Naive thymus-derived CD4-positive, alpha-beta T cell (primary cell): ENCODE measurements at regions of chr1 and their contacts with region 1.

Region 1: GRCh38 chr1:117367047-117368018 is at the start of gene MAN1A2:
- DNase-seq: peak in 7 of 9 donors; percentile 59 to 79 (median 75)
- ATAC-seq: peak; percentile 78
- H3K4me3 ChIP-seq: peak within 1 kb of the TSS; percentile 83
- H3K4me3 Mint-ChIP-seq: peak within 1 kb of the TSS; percentile 92 to 98 (median 95)
- H3K27ac ChIP-seq: peak within 1 kb of the TSS; percentile 91
- H3K27ac Mint-ChIP-seq: peak within 1 kb of the TSS; percentile 92 to 99 (median 97)
- H3K4me1 ChIP-seq: peaks cover 23 to 44% of the 10 kb centered on the region in 2 donors
- H3K4me1 Mint-ChIP-seq: peaks cover 46 to 82% (median 73%) of the 10 kb centered on the region in 7 donors
- H3K27me3 ChIP-seq: no peaks in the 10 kb centered on the region
- H3K27me3 Mint-ChIP-seq: no peaks in the 10 kb centered on the region
- total RNA-seq, gene MAN1A2: 40.4 to 63.4 (median 47.1) TPM

Region 2: GRCh38 chr1:117001254-117001927 is 365.9 kb before region 1 on chr1 and contains the start of gene CD101:
- CTCF ChIA-PET with region 1: no interaction called
- POLR2A ChIA-PET with region 1: no interaction called
- intact Hi-C with region 1: loop called in 1 of 2 experiments (anchors 10 kb)
- DNase-seq: peak in 4 of 9 donors; percentile 18 to 39 (median 32)
- ATAC-seq: peak; percentile 72
- H3K4me3 ChIP-seq: peak within 1 kb of the TSS; percentile 17
- H3K4me3 Mint-ChIP-seq: peak within 1 kb of the TSS; percentile 30 to 72 (median 60)
- H3K27ac ChIP-seq: peak within 1 kb of the TSS; percentile 60
- H3K27ac Mint-ChIP-seq: peak within 1 kb of the TSS; percentile 84 to 95 (median 87)
- H3K4me1 ChIP-seq: peaks cover 0 to 48% of the 10 kb centered on the region in 2 donors
- H3K4me1 Mint-ChIP-seq: peaks cover 36 to 72% (median 59%) of the 10 kb centered on the region in 7 donors
- H3K27me3 ChIP-seq: no peaks in the 10 kb centered on the region
- H3K27me3 Mint-ChIP-seq: no peaks in the 10 kb centered on the region
- total RNA-seq, gene CD101: 3.9 to 15.4 (median 10.3) TPM

Region 3: GRCh38 chr1:117339866-117340700 is 27.2 kb before region 1 on chr1:
- CTCF ChIA-PET with region 1: no interaction called
- POLR2A ChIA-PET with region 1: interaction called, 4 read pairs
- intact Hi-C with region 1: loop called in 1 of 2 experiments (anchors 2 kb)
- DNase-seq: peak in 7 of 9 donors; percentile 10 to 44 (median 26)
- ATAC-seq: peak; percentile 78
- H3K4me3 ChIP-seq: no peak overlapping the region
- H3K4me3 Mint-ChIP-seq: no peak overlapping the region
- H3K27ac ChIP-seq: no peak overlapping the region
- H3K27ac Mint-ChIP-seq: peak overlapping the region in 4 of 9 donors; percentile 13 to 44 (median 24)
- H3K4me1 ChIP-seq: no peaks in the 10 kb centered on the region
- H3K4me1 Mint-ChIP-seq: peaks cover 5 to 27% (median 25%) of the 10 kb centered on the region in 7 donors
- H3K27me3 ChIP-seq: no peaks in the 10 kb centered on the region
- H3K27me3 Mint-ChIP-seq: peaks cover 0 to 7% (median 0%) of the 10 kb centered on the region in 5 donors

Region 4: DNA sequence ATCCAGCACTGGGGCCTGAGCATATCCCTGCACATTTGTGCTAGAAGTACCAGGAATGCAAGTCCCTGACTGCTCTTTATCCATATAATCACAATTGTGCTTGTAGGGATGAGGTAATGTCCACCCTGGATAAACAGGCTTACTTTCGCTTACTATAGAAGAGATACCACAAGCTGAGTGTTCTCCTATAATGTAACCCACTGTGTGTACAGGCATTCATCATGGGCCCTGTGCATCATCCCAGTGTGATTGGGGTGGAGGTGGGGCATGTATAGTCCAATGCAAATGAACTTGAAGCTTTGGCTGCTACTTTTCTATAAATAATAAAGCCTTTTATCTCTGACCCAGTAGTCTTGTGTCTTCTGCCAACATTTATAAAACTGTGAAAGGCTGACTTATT is 69.2 kb after region 1 on chr1:
- CTCF ChIA-PET with region 1: no interaction called
- POLR2A ChIA-PET with region 1: no interaction called
- intact Hi-C with region 1: no loop called
- DNase-seq: no peak
- ATAC-seq: no peak
- H3K4me3 ChIP-seq: no peak overlapping the region
- H3K4me3 Mint-ChIP-seq: no peak overlapping the region
- H3K27ac ChIP-seq: no peak overlapping the region
- H3K27ac Mint-ChIP-seq: no peak overlapping the region
- H3K4me1 ChIP-seq: no peaks in the 10 kb centered on the region
- H3K4me1 Mint-ChIP-seq: peaks cover 0 to 25% (median 16%) of the 10 kb centered on the region in 7 donors
- H3K27me3 ChIP-seq: no peaks in the 10 kb centered on the region
- H3K27me3 Mint-ChIP-seq: no peaks in the 10 kb centered on the region

Region 5: DNA sequence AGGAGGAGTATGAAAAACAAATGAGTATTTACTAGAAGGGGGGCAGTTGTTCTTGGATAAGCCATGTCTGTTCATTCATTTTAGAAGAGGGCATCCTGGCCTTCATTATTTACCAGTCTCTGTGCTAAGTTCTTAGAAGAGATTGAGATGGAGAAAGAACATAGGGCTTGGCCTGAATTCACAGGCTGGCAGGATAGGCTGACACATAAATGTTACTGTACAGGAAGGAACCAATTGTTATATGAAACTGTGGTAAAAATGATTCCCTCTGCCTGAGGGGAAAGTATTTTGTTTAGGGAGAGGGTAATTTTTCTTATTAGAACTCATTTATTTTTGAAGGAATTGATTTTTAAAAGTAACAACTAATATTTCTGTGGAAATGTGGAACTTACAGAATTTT is 99.4 kb after region 1 on chr1:
- CTCF ChIA-PET with region 1: no interaction called
- POLR2A ChIA-PET with region 1: no interaction called
- intact Hi-C with region 1: loop called in 1 of 2 experiments (anchors 5 kb)
- DNase-seq: no peak
- ATAC-seq: no peak
- H3K4me3 ChIP-seq: no peak overlapping the region
- H3K4me3 Mint-ChIP-seq: no peak overlapping the region
- H3K27ac ChIP-seq: no peak overlapping the region
- H3K27ac Mint-ChIP-seq: no peak overlapping the region
- H3K4me1 ChIP-seq: no peaks in the 10 kb centered on the region
- H3K4me1 Mint-ChIP-seq: peaks cover 0 to 7% (median 0%) of the 10 kb centered on the region in 7 donors
- H3K27me3 ChIP-seq: no peaks in the 10 kb centered on the region
- H3K27me3 Mint-ChIP-seq: no peaks in the 10 kb centered on the region

Region 6: DNA sequence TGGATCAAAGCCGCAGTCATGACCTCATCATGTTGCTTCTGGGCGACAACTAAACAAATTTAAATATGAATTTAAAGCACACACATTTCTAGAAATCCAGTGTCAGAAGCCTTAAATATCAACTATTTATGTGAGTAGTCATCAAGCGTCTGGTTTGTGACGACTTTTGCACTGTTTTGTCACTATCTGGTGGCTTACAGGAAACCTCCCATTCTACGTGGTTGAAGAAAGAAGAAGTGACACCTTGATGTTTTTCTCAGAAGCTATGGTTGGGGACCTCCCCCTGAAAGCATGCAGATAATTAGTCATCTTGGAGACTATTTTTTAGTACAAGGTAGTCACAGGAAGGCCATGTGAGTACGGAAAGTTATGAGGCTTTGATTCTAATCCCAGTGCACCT is 297.0 kb after region 1 on chr1:
- CTCF ChIA-PET with region 1: no interaction called
- POLR2A ChIA-PET with region 1: interaction called, 3 read pairs
- intact Hi-C with region 1: loop called (anchors 2 to 5 kb)
- DNase-seq: peak in 8 of 9 donors; percentile 49 to 87 (median 83)
- ATAC-seq: peak; percentile 88
- H3K4me3 ChIP-seq: peak overlapping the region; percentile 5
- H3K4me3 Mint-ChIP-seq: peak overlapping the region in 7 of 10 donors; percentile 19 to 60 (median 37)
- H3K27ac ChIP-seq: no peak overlapping the region
- H3K27ac Mint-ChIP-seq: peak overlapping the region; percentile 74 to 97 (median 93)
- H3K4me1 ChIP-seq: peaks cover 38 to 71% of the 10 kb centered on the region in 2 donors
- H3K4me1 Mint-ChIP-seq: peaks cover 35 to 81% (median 66%) of the 10 kb centered on the region in 7 donors
- H3K27me3 ChIP-seq: no peaks in the 10 kb centered on the region
- H3K27me3 Mint-ChIP-seq: peaks cover 0 to 15% (median 4%) of the 10 kb centered on the region in 5 donors

Region 7: DNA sequence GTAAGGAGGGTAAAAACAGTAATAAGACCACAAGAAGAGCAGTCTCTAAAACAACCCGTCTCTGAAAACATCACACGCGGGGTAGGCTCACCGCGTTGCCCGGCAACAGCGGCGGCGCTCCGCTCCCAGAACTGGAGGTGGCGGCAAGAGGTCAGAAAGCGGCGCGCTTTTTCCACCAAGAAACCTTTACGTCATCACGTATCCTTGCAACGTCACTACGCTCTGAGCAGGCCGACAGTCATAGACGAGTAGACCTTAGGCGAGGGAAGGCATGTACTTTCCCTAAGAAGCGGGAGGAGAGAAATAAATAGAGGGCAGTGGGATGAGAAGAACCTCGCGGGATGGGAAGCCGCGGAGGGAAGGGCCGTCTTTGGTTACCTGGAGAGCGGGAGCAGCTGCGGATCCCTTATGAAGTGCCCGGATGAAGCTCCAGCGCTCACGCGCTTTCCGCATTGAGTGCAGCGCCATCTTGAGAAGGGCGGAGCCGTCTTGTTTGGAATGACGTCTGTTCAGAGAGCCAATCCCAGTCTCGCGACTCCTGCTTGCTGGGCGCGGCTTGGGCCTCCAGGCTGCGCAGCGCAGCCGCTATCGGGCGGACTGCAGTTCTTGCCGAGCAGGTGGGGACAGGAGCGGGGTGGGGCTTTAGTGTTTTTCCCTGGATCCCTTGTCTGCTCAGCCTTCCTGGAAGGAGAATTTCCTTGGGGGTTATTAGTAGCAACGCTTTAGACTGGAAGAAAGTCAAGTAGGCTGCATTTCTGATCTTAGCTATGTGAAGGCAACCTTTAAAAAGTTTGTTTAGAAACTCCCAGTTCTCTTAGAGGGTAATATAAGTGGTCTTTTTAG is 1773.1 kb after region 1 on chr1 and contains the start of gene WARS2:
- CTCF ChIA-PET with region 1: no interaction called
- POLR2A ChIA-PET with region 1: no interaction called
- intact Hi-C with region 1: loop called in 1 of 2 experiments (anchors 2 kb)
- DNase-seq: peak; percentile 78 to 97 (median 97)
- ATAC-seq: peak; percentile 93
- H3K4me3 ChIP-seq: peak within 1 kb of the TSS; percentile 97
- H3K4me3 Mint-ChIP-seq: no peak within 1 kb of the TSS
- H3K27ac ChIP-seq: peak within 1 kb of the TSS; percentile 98
- H3K27ac Mint-ChIP-seq: no peak within 1 kb of the TSS
- H3K4me1 ChIP-seq: peaks cover 12 to 25% of the 10 kb centered on the region in 2 donors
- H3K4me1 Mint-ChIP-seq: peaks cover 17 to 38% (median 27%) of the 10 kb centered on the region in 7 donors
- H3K27me3 ChIP-seq: no peaks in the 10 kb centered on the region
- H3K27me3 Mint-ChIP-seq: no peaks in the 10 kb centered on the region
- total RNA-seq, gene WARS2: 8.6 to 27.1 (median 12.9) TPM

Region 8: GRCh38 chr1:119367427-119368124 is 2000.2 kb after region 1 on chr1:
- CTCF ChIA-PET with region 1: no interaction called
- POLR2A ChIA-PET with region 1: no interaction called
- intact Hi-C with region 1: no loop called
- DNase-seq: no peak
- ATAC-seq: no peak
- H3K4me3 ChIP-seq: no peak overlapping the region
- H3K4me3 Mint-ChIP-seq: no peak overlapping the region
- H3K27ac ChIP-seq: no peak overlapping the region
- H3K27ac Mint-ChIP-seq: no peak overlapping the region
- H3K4me1 ChIP-seq: no peaks in the 10 kb centered on the region
- H3K4me1 Mint-ChIP-seq: peaks cover 0 to 4% (median 0%) of the 10 kb centered on the region in 7 donors
- H3K27me3 ChIP-seq: no peaks in the 10 kb centered on the region
- H3K27me3 Mint-ChIP-seq: peaks cover 12 to 43% (median 34%) of the 10 kb centered on the region in 5 donors